Left ventricle myocardium superior (tissue), 1 donor: ENCODE measurements at regions of chr18 and their contacts with region 1.

Region 1: GRCh38 chr18:55401638-55402191 is 186.3 kb downstream of the TCF4 start:
- DNase-seq: no peak
- ATAC-seq: peak; percentile 69

Region 2: GRCh38 chr18:55189972-55190371 is 211.7 kb before region 1 on chr18:
- intact Hi-C with region 1: no loop called
- DNase-seq: no peak
- ATAC-seq: no peak

Region 3: DNA sequence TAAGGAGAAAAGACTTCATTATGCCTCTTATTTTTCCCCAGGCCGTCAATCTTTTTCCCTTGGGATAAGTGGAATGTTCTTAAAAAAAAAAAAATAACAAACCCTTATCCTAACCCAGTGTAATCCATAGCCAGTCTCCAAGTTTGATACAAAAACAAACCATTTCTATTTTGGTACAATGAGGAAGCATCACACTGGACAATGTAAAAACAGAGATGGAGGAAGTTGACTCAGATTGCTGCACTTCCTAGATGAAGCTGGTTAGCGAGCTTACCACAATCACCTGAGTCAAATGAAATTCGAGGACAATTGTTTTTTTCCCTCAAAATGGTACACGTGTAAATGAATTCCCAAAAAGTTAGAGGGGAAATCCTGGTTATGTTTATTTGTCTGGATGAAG is 73.4 kb before region 1 on chr18:
- intact Hi-C with region 1: loop called (anchors 5 kb)
- DNase-seq: no peak
- ATAC-seq: peak; percentile 90

Region 4: GRCh38 chr18:55443776-55444175 is 42.1 kb after region 1 on chr18:
- intact Hi-C with region 1: no loop called
- DNase-seq: no peak
- ATAC-seq: no peak

Region 5: DNA sequence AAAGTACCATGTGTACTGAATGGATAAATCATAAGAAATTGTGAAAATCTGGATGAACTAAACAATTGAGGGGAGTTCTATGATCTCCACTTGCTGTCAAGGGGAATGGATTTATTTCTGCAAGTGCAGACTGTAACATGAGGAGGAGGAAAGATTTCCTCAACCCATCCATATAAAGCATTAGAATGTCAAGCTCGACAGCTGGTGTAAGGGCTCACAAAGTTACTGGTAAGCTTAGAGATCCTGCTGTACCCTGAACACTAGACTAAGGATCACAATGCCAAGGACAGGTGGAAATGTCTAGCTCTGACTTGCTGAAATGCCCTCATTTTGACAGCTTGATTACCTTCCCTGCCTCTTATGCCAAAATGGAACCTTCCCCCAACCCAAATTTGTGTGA is 60.9 kb after region 1 on chr18:
- intact Hi-C with region 1: no loop called
- DNase-seq: no peak
- ATAC-seq: no peak

Region 6: DNA sequence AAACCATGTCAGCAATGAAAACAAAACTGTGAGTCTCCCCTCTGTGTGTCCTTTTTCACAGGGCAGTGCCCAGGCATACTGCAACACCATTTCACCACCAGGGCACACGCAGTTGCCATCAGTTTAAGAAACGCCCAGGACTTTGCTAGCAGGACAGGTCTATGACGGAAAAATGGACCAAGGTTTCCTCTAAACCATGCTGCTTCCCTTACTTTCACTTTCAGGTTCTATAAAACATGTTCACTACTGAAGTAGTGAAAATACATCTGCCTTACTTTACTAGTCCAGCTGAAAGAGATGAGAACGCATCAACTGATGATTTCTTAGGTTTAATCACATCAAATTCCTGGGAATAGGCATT is 75.8 kb after region 1 on chr18:
- intact Hi-C with region 1: no loop called
- DNase-seq: no peak
- ATAC-seq: peak; percentile 85